Activated CD8-positive, alpha-beta T cell treated with anti-CD3 and anti-CD28 coated beads, Interleukin-2, amount 10 ng/mL, durations not matched to agents 7 days and 5 days (primary cell): ENCODE measurements at regions of chr16 and their contacts with region 1.

Region 1: GRCh38 chr16:57462209-57462977 is at the start of gene POLR2C:
- DNase-seq: peak; percentile 95
- ATAC-seq: peak; percentile 97
- H3K4me3 Mint-ChIP-seq: peak within 1 kb of the TSS; percentile 100
- H3K27ac Mint-ChIP-seq: peak within 1 kb of the TSS; percentile 100
- H3K4me1 Mint-ChIP-seq: peaks cover 29% of the 10 kb centered on the region
- H3K27me3 Mint-ChIP-seq: no peaks in the 10 kb centered on the region
- total RNA-seq, gene POLR2C: 57.0 to 58.3 TPM

Region 2: GRCh38 chr16:57318240-57318970 is 144.0 kb before region 1 on chr16:
- CTCF ChIA-PET with region 1: no interaction called
- POLR2A ChIA-PET with region 1: no interaction called
- DNase-seq: no peak
- ATAC-seq: no peak
- H3K4me3 Mint-ChIP-seq: no peak overlapping the region
- H3K27ac Mint-ChIP-seq: no peak overlapping the region
- H3K4me1 Mint-ChIP-seq: peaks cover 14% of the 10 kb centered on the region
- H3K27me3 Mint-ChIP-seq: no peaks in the 10 kb centered on the region

Region 3: DNA sequence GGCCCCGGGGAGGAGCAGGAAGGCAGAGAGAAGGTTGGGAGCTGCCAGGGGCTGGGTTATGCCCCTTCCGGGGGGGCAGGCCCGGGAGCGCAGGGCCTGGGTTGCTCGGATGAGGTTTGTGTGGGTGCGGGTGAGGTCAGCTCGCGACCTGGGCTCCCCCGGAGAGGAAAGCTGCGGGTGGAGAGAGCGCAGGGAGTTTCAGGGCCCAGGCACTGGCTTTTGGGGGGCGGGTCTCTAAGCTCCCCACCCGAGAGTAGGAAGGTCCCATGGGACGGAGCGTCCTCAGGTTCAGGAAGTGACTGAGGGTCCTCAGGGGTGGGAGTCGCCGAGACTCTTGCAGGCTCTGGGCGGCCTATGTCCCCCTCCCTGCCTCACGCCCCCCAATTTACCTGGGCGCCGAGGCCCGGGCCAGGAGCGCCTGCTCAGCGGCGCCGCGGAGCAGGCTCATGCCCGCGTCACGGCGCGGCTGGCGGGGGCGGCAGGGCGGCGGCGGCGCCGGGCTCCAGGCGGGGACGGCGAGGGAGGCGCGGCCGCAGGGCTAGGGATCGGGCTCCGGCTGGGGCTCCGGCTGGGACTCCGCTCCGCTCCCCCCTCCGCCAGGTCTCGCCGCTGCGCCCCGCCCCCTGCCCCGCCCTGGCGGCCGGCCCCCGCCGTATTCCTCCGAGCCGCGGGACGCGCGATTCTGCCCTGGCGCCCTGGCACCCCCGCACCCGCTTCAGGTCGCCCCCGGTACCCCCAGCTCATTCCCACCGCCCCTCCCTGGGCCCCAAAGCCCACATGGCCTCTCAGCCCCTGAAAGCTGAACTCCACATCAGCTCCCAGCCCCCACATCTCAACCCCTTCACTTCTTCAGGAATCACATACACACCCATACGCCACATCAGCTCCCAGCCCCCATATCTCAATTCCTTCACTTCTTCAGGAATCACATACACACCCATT is 23.8 kb after region 1 on chr16 and contains the start of gene DOK4:
- CTCF ChIA-PET with region 1: interaction called, 27 read pairs
- POLR2A ChIA-PET with region 1: interaction called, 12 read pairs
- DNase-seq: peak; percentile 82
- ATAC-seq: peak; percentile 99
- H3K4me3 Mint-ChIP-seq: peak within 1 kb of the TSS; percentile 76
- H3K27ac Mint-ChIP-seq: peak within 1 kb of the TSS; percentile 76
- H3K4me1 Mint-ChIP-seq: peaks cover 19% of the 10 kb centered on the region
- H3K27me3 Mint-ChIP-seq: peaks cover 5% of the 10 kb centered on the region
- total RNA-seq, gene DOK4: 4.8 to 6.4 TPM

Region 4: DNA sequence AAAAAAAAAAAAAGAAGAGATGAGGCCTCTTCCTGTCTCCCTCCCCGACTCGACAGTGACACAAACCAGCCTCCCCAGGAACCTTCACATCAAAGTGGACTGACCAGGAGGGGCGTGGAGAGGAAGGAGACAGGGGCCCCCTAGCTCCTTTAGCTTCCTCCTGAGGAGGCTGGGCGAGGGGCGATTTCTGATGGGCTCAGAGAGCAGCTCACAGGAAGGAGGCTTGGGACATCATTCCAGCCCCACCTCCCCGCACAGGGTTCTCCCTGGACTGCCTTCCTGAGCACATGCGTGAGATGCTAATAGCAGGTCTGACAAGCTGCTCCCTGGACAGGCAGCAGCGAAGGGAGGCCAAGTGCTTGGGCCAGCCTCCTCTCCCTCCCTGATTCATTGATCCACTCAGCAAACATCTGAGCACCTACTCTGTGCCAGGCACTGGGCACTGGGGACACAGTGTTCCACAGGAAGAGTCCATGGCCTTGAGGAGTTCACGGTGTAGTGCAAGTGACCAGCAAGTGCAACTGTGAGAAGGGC is 38.3 kb after region 1 on chr16:
- CTCF ChIA-PET with region 1: interaction called, 11 read pairs
- POLR2A ChIA-PET with region 1: interaction called, 3 read pairs
- DNase-seq: peak; percentile 70
- ATAC-seq: peak; percentile 85
- H3K4me3 Mint-ChIP-seq: peak overlapping the region; percentile 5
- H3K27ac Mint-ChIP-seq: peak overlapping the region; percentile 83
- H3K4me1 Mint-ChIP-seq: peaks cover 17% of the 10 kb centered on the region
- H3K27me3 Mint-ChIP-seq: peaks cover 4% of the 10 kb centered on the region